CD8-positive, alpha-beta memory T cell (primary cell): ENCODE measurements at regions of chr20 and their contacts with region 1.

Region 1: GRCh38 chr20:21505161-21505809 is 8.6 kb downstream of the NKX2-2 start:
- DNase-seq: peak; percentile 55 to 76 (median 71)
- H3K4me3 ChIP-seq: no peak overlapping the region
- H3K4me3 Mint-ChIP-seq: peak overlapping the region; percentile 40 to 75 (median 70)
- H3K27ac ChIP-seq: no peak overlapping the region
- H3K27ac Mint-ChIP-seq: peak overlapping the region in 1 of 8 donors; percentile 4
- H3K4me1 ChIP-seq: peaks cover 23% of the 10 kb centered on the region
- H3K4me1 Mint-ChIP-seq: peaks cover 24 to 33% (median 26%) of the 10 kb centered on the region in 3 donors
- H3K27me3 ChIP-seq: peaks cover 34% of the 10 kb centered on the region
- H3K27me3 Mint-ChIP-seq: peaks cover 47 to 64% of the 10 kb centered on the region in 2 donors

Region 2: DNA sequence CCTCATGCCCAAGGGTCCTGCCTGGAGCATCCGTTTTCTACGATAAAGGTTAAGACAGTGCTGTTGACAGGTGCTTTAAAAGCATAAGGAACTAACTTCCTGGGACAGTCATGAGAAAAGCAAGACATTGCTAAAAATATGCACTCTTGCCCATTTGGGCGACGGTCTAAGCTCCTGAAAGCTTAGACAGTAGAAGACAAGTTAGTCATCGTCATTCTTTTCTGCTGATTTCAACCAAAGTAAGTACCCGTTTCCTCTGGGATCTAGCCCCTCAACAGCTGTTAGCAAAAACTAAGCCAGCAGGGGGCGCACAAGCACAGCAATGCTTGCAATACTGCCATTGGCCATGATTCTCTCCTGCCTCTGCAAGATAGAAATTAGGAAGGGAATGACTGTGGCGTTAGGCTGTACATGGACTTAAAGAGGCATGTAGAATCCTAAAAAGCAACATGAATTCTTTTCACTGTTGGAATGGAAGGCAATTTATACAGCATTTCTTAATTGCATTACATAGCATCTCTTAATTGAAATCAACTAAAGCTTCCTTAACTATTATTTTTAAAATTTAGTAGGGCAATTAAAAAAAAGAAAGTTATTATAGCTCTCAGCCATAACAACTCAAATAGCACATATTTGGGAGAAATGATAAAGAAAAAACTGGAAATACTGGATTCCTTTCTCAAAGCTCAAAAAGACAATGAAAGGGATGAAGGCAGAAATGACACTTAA is 645.0 kb before region 1 on chr20:
- CTCF ChIA-PET with region 1: interaction called, 27 read pairs
- POLR2A ChIA-PET with region 1: no interaction called
- DNase-seq: peak; percentile 47 to 82 (median 69)
- H3K4me3 ChIP-seq: no peak overlapping the region
- H3K4me3 Mint-ChIP-seq: no peak overlapping the region
- H3K27ac ChIP-seq: no peak overlapping the region
- H3K27ac Mint-ChIP-seq: no peak overlapping the region
- H3K4me1 ChIP-seq: no peaks in the 10 kb centered on the region
- H3K4me1 Mint-ChIP-seq: no peaks in the 10 kb centered on the region
- H3K27me3 ChIP-seq: no peaks in the 10 kb centered on the region
- H3K27me3 Mint-ChIP-seq: peaks cover 7 to 25% of the 10 kb centered on the region in 2 donors

Region 3: GRCh38 chr20:21235484-21236445 is 269.5 kb before region 1 on chr20:
- CTCF ChIA-PET with region 1: interaction called, 113 read pairs
- POLR2A ChIA-PET with region 1: interaction called, 3 read pairs
- DNase-seq: peak; percentile 43 to 68 (median 48)
- H3K4me3 ChIP-seq: no peak overlapping the region
- H3K4me3 Mint-ChIP-seq: no peak overlapping the region
- H3K27ac ChIP-seq: no peak overlapping the region
- H3K27ac Mint-ChIP-seq: peak overlapping the region in 1 of 8 donors; percentile 33
- H3K4me1 ChIP-seq: no peaks in the 10 kb centered on the region
- H3K4me1 Mint-ChIP-seq: peaks cover 3 to 6% (median 4%) of the 10 kb centered on the region in 3 donors
- H3K27me3 ChIP-seq: no peaks in the 10 kb centered on the region
- H3K27me3 Mint-ChIP-seq: no peaks in the 10 kb centered on the region

Region 4: GRCh38 chr20:21436205-21436604 is 69.1 kb before region 1 on chr20:
- CTCF ChIA-PET with region 1: no interaction called
- POLR2A ChIA-PET with region 1: no interaction called
- DNase-seq: no peak
- H3K4me3 ChIP-seq: no peak overlapping the region
- H3K4me3 Mint-ChIP-seq: no peak overlapping the region
- H3K27ac ChIP-seq: no peak overlapping the region
- H3K27ac Mint-ChIP-seq: no peak overlapping the region
- H3K4me1 ChIP-seq: no peaks in the 10 kb centered on the region
- H3K4me1 Mint-ChIP-seq: no peaks in the 10 kb centered on the region
- H3K27me3 ChIP-seq: peaks cover 10% of the 10 kb centered on the region
- H3K27me3 Mint-ChIP-seq: peaks cover 15 to 66% of the 10 kb centered on the region in 2 donors